Activated CD4-positive, alpha-beta T cell treated with anti-CD3 and anti-CD28 coated beads, Interleukin-2, amount 10 ng/mL, durations not matched to agents 24 days and 14 days (primary cell): ENCODE measurements at regions of chr5 and their contacts with region 1.

Region 1: GRCh38 chr5:72955768-72956323 is at the start of gene FCHO2:
- DNase-seq: peak; percentile 98
- H3K4me3 Mint-ChIP-seq: peak within 1 kb of the TSS; percentile 90
- H3K27ac Mint-ChIP-seq: peak within 1 kb of the TSS; percentile 85
- H3K4me1 Mint-ChIP-seq: peaks cover 13% of the 10 kb centered on the region
- H3K27me3 Mint-ChIP-seq: peaks cover 60% of the 10 kb centered on the region
- total RNA-seq, gene FCHO2: 0.33 and 1.5 TPM in 2 replicates

Region 2: DNA sequence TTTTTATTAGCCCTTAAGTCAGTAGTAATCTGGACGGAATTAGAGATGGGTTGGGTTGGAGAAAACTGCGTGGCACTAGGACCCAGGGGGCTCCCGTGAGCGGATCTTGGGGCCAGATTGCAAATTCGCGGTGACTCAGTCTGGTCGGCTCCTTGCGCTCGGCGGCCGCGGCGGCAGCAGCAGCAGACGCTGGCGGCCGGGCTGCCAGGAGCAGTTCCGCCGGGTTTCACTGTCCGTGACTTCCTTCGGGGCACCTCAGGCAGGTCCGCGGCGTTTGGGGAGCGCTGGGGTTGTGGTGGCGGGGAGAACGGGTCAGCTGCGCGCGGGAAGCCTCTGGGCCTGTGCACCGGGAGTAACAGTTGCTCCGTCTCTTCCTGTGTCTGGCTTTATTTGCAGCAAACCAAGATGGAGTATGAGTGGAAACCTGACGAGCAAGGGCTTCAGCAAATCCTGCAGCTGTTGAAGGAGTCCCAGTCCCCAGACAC is 107.8 kb before region 1 on chr5:
- intact Hi-C with region 1: loop called (anchors 2 kb)
- DNase-seq: peak; percentile 95
- H3K4me3 Mint-ChIP-seq: peak overlapping the region; percentile 99
- H3K27ac Mint-ChIP-seq: peak overlapping the region; percentile 99
- H3K4me1 Mint-ChIP-seq: peaks cover 29% of the 10 kb centered on the region
- H3K27me3 Mint-ChIP-seq: peaks cover 18% of the 10 kb centered on the region

Region 3: DNA sequence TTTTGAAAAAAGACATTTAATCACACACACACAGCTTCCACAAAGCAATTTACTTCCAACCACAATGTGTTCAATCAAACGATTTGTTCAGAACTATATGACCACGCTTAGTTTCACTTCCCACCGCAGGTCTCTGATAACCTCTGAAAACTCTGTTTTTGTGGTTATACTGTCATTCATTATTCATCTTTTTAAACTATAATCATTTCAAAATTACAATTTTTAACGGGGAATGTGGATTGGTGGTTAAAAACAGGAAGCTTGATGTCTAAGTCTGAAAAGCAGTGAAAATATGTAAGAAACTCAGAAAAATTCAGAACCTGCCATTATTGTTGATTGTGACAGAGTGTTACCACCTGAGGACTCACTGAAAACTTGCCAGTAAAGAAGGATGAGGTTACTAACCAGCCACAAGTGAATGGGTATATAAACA is 204.4 kb after region 1 on chr5:
- intact Hi-C with region 1: loop called (anchors 2 kb)
- DNase-seq: peak; percentile 88
- H3K4me3 Mint-ChIP-seq: peak overlapping the region; percentile 48
- H3K27ac Mint-ChIP-seq: peak overlapping the region; percentile 49
- H3K4me1 Mint-ChIP-seq: peaks cover 21% of the 10 kb centered on the region
- H3K27me3 Mint-ChIP-seq: peaks cover 74% of the 10 kb centered on the region

Region 4: GRCh38 chr5:73201547-73202513 is 246.0 kb after region 1 on chr5:
- intact Hi-C with region 1: loop called (anchors 1 kb)
- DNase-seq: peak; percentile 89
- H3K4me3 Mint-ChIP-seq: no peak overlapping the region
- H3K27ac Mint-ChIP-seq: no peak overlapping the region
- H3K4me1 Mint-ChIP-seq: peaks cover 2% of the 10 kb centered on the region
- H3K27me3 Mint-ChIP-seq: peaks cover 36% of the 10 kb centered on the region

Region 5: GRCh38 chr5:73215891-73216610 is 260.2 kb after region 1 on chr5:
- intact Hi-C with region 1: loop called (anchors 5 kb)
- DNase-seq: peak; percentile 86
- H3K4me3 Mint-ChIP-seq: no peak overlapping the region
- H3K27ac Mint-ChIP-seq: no peak overlapping the region
- H3K4me1 Mint-ChIP-seq: peaks cover 5% of the 10 kb centered on the region
- H3K27me3 Mint-ChIP-seq: peaks cover 73% of the 10 kb centered on the region

Region 6: DNA sequence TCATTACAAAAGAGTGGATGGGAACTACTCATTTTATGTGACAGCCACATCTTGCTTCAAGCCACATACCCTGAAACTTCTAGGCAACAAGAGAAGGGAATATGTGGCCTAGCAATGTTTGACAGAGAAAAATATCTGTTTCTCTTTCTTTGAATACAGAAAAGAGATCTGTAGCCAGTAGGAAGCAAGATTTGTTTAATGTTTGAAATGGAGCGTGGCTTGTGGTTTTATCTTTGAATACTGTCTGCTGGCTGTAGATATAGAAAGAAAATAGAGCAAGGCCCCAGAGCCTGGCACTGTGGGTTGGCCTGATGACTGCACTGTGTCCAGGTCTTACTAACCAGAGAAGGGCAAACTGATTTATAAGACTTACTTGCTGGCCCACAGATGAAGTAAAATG is 803.9 kb after region 1 on chr5:
- intact Hi-C with region 1: no loop called
- DNase-seq: no peak
- H3K4me3 Mint-ChIP-seq: no peak overlapping the region
- H3K27ac Mint-ChIP-seq: no peak overlapping the region
- H3K4me1 Mint-ChIP-seq: no peaks in the 10 kb centered on the region
- H3K27me3 Mint-ChIP-seq: peaks cover 2% of the 10 kb centered on the region